ENCODE measurements at regions of chr20 and their contacts with region 1.

Region 1: GRCh38 chr20:33731693-33732165 is at the start of gene ZNF341:
- DNase-seq: peak; percentile 94
- H3K4me3 ChIP-seq: peak within 1 kb of the TSS; percentile 70
- H3K27ac ChIP-seq: peak within 1 kb of the TSS; percentile 90
- H3K4me1 ChIP-seq: peaks cover 30% of the 10 kb centered on the region
- CTCF ChIP-seq: peak; percentile 81
- total RNA-seq, gene ZNF341: 3.2 and 3.4 TPM in 2 replicates

Region 2: DNA sequence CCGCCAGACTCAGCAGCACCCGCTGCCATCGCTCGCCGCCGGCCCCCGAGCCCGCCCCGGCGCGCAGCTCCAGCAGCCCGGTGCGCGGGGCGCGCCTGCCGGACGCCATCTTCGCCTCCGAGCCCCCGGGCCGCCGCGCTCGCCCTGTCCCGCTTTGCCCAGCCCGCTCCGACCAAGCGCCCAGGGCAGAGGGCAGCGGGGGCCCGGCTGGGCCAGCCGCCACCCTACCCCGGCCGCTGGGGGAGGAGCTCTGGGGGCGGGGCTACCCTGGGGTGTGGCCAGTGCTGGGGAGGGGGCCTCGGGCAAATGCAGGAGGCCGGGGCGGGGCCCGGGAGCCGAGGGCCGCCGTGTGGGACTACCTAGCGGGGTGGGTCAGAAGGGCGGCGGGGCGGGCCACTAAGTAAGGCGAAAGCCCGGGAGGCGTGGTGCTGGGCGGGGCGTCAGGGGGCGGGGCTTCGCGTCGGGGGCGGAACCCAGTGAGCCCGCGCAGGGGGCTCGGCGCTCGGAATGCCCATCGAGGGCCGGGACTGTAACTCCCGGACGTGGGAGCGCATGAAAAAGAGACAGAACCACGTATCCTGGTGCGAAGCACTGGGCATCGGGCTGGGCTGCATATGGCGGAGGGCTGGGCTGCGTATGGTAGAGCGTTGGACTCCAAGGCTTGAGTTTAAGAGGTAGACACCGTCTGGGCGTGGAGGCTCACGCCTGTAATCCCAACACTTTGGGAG is 288.1 kb before region 1 on chr20 and contains the start of gene SNTA1:
- CTCF ChIA-PET with region 1: interaction called, 3 read pairs
- POLR2A ChIA-PET with region 1: no interaction called
- intact Hi-C with region 1: loop called (anchors 5 kb)
- DNase-seq: peak; percentile 96
- H3K4me3 ChIP-seq: peak within 1 kb of the TSS; percentile 76
- H3K27ac ChIP-seq: peak within 1 kb of the TSS; percentile 95
- H3K4me1 ChIP-seq: peaks cover 69% of the 10 kb centered on the region
- CTCF ChIP-seq: no peak
- total RNA-seq, gene SNTA1: 44.8 and 46.5 TPM in 2 replicates

Region 3: GRCh38 chr20:33666293-33667244 is 65.2 kb before region 1 on chr20 and contains the start of gene ACTL10:
- CTCF ChIA-PET with region 1: no interaction called
- POLR2A ChIA-PET with region 1: interaction called, 4 read pairs
- intact Hi-C with region 1: loop called (anchors 2 kb)
- DNase-seq: peak; percentile 94
- H3K4me3 ChIP-seq: peak within 1 kb of the TSS; percentile 77
- H3K27ac ChIP-seq: peak within 1 kb of the TSS; percentile 79
- H3K4me1 ChIP-seq: peaks cover 64% of the 10 kb centered on the region
- CTCF ChIP-seq: no peak
- total RNA-seq, gene ACTL10: 7.4 and 11.7 TPM in 2 replicates

Region 4: GRCh38 chr20:33674295-33675135 is 57.2 kb before region 1 on chr20 and contains the start of gene NECAB3:
- CTCF ChIA-PET with region 1: no interaction called
- POLR2A ChIA-PET with region 1: no interaction called
- intact Hi-C with region 1: loop called (anchors 2 kb)
- DNase-seq: peak; percentile 79
- H3K4me3 ChIP-seq: peak within 1 kb of the TSS; percentile 84
- H3K27ac ChIP-seq: peak within 1 kb of the TSS; percentile 68
- H3K4me1 ChIP-seq: peaks cover 59% of the 10 kb centered on the region
- CTCF ChIP-seq: 0 out of 2 replicates have a peak, but pooled peaks have one; percentile 18
- total RNA-seq, gene NECAB3: 48.2 and 62.4 TPM in 2 replicates

Region 5: DNA sequence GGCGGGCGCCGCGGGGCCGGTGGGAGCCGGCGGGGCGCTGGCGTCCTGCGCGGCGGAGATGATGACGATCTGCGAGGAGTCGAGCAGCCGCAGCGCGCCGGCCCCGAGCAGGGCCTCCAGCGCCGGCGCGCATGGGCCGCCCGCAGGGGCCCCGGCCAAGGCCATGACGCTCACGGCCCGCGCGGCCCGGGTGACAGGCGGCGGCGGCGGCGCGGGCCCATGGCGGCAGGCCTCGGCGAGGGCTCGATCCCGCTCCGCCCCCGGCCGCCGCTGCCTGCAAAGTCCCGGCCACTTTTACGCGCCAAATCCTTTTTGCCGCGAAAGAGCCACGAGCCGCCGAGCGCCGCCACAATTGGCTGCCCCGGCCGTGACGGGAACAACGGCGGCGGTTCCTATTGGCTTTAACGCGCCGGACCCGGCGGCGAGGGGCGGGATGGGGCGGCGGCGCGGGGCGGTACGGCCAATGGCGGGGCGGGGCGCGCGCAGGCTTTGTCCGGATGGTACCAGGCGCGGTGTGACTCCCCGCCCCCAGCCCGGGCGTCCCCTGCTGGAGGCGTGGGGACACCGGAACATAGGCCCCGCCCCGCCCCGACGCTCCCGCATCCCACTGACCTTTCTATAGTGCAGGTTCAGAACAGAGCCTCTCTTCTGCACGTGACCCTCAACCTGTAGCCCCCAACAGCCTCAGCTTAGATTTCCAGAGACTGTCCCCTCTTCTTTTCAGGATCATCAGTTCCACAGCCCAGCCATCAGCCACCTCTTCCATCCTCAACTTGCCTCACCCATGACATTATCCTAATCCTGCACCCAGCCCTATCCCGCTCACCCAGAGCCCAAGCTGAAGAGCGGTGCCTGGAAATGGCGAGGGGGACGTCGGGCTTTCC is 45.4 kb before region 1 on chr20 and contains the start of gene E2F1:
- CTCF ChIA-PET with region 1: interaction called, 4 read pairs
- POLR2A ChIA-PET with region 1: interaction called, 5 read pairs
- intact Hi-C with region 1: loop called (anchors 1 kb)
- DNase-seq: peak; percentile 97
- H3K4me3 ChIP-seq: peak within 1 kb of the TSS; percentile 90
- H3K27ac ChIP-seq: peak within 1 kb of the TSS; percentile 94
- H3K4me1 ChIP-seq: peaks cover 71% of the 10 kb centered on the region
- CTCF ChIP-seq: 0 out of 2 replicates have a peak, but pooled peaks have one; percentile 50
- total RNA-seq, gene E2F1: 128 and 135 TPM in 2 replicates

Region 6: GRCh38 chr20:33777816-33778215 is 46.1 kb after region 1 on chr20:
- CTCF ChIA-PET with region 1: no interaction called
- POLR2A ChIA-PET with region 1: interaction called, 6 read pairs
- intact Hi-C with region 1: loop called (anchors 1 kb)
- DNase-seq: peak; percentile 20
- H3K4me3 ChIP-seq: no peak overlapping the region
- H3K27ac ChIP-seq: peak overlapping the region; percentile 96
- H3K4me1 ChIP-seq: peaks cover 46% of the 10 kb centered on the region
- CTCF ChIP-seq: no peak

Region 7: DNA sequence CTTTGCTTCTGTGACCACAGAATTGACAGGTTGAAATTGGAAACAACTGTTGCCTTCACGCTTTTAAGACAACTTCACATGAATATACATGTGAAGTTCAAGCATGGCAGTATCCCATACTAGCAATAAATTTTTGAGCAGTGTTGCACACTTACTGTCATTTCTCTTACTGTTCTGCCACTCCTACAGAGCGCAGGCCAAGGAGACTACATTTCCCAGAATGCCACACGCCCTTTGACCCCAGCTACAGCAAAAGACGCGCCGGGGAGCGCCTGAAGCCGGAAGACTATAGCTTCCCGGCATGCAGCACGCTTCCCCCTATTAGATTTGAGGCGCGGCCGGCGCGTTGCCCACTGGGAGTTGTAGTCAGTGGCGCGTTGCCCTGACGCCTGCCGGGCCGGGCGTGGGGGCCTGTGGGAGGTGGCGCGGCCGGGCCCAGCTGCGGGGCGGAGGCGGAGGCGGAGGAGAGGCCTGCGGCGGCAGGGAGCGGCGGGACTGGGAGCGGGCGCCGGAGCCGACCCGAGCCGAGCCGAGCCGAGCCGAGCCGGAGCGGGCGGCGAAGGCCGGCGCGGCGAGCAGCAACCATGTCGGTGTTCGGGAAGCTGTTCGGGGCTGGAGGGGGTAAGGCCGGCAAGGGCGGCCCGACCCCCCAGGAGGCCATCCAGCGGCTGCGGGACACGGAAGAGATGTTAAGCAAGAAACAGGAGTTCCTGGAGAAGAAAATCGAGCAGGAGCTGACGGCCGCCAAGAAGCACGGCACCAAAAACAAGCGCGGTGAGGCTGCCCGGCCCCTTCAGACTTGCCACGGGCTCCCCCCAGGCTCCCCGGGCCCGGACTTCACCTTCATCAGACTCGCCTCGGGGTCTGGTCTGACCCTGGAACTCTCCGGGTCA is 79.4 kb after region 1 on chr20 and contains the start of gene CHMP4B:
- CTCF ChIA-PET with region 1: no interaction called
- POLR2A ChIA-PET with region 1: interaction called, 3 read pairs
- intact Hi-C with region 1: loop called (anchors 2 kb)
- DNase-seq: peak; percentile 98
- H3K4me3 ChIP-seq: peak within 1 kb of the TSS; percentile 92
- H3K27ac ChIP-seq: peak within 1 kb of the TSS; percentile 61
- H3K4me1 ChIP-seq: peaks cover 18% of the 10 kb centered on the region
- CTCF ChIP-seq: no peak
- total RNA-seq, gene CHMP4B: 32.4 and 46.6 TPM in 2 replicates

Region 8: GRCh38 chr20:33897313-33897912 is 165.7 kb after region 1 on chr20:
- CTCF ChIA-PET with region 1: no interaction called
- POLR2A ChIA-PET with region 1: no interaction called
- intact Hi-C with region 1: no loop called
- DNase-seq: no peak
- H3K4me3 ChIP-seq: no peak overlapping the region
- H3K27ac ChIP-seq: no peak overlapping the region
- H3K4me1 ChIP-seq: peaks cover 52% of the 10 kb centered on the region
- CTCF ChIP-seq: peak; percentile 85

Region 9: GRCh38 chr20:33954504-33954903 is 222.8 kb after region 1 on chr20:
- CTCF ChIA-PET with region 1: no interaction called
- POLR2A ChIA-PET with region 1: no interaction called
- intact Hi-C with region 1: no loop called
- DNase-seq: no peak
- H3K4me3 ChIP-seq: no peak overlapping the region
- H3K27ac ChIP-seq: no peak overlapping the region
- H3K4me1 ChIP-seq: no peaks in the 10 kb centered on the region
- CTCF ChIP-seq: no peak